ENCODE measurements at regions of chr2 and their contacts with region 1.

Region 1: DNA sequence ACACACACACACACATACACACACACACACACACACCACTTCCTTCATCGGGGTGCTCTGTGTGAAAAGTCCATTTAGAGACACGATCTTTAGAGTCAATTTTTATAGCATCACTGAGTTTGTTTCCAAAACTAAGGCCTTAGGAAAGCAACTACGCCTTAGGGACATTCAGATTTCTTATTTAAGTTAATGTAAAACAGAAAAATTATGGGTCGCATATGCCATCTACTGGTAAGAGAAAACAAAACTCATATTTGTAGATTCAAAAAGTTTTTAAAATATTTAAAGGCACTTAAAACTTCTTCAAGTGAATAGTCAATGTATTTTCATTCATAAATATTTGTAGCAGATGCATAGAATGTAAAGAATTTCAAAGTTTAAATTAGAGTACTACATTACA is 166.2 kb downstream of the ATAD2B start:
- DNase-seq: no peak
- ATAC-seq: no peak
- H3K4me3 ChIP-seq: no peak overlapping the region
- H3K27ac ChIP-seq: no peak overlapping the region
- H3K4me1 ChIP-seq: peaks cover 0 to 20% (median 7%) of the 10 kb centered on the region in 12 donors
- H3K27me3 ChIP-seq: no peaks in the 10 kb centered on the region
- CTCF ChIP-seq: peak in 10 of 12 donors; percentile 18 to 52 (median 35)
- POLR2A ChIP-seq: no peak

Region 2: DNA sequence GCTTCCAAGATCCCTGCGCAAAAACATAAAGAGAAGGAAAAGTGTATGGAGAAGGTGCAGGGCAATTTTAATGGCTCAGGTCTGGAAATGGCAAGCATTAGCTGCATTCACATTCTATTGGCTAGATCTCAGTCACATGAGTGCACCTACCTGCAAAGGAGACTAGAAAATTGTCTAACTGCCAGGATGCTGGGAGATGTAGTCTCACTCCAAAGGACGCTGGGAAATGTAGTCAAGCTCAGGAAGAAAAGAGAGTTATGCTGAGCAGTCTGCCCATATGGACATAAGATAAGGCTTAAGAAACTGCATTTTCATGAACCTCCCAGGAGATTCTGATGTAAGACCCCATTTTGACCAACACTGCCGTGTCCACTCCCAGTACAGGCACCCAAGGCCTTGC is 385.3 kb before region 1 on chr2:
- intact Hi-C with region 1: loop called in 2 of 10 experiments (anchors 10 kb)
- DNase-seq: no peak
- ATAC-seq: no peak
- H3K4me3 ChIP-seq: no peak overlapping the region
- H3K27ac ChIP-seq: no peak overlapping the region
- H3K4me1 ChIP-seq: peaks cover 0 to 5% (median 0%) of the 10 kb centered on the region in 12 donors
- H3K27me3 ChIP-seq: peaks cover 0 to 27% (median 0%) of the 10 kb centered on the region in 9 donors
- CTCF ChIP-seq: no peak
- POLR2A ChIP-seq: no peak

Region 3: DNA sequence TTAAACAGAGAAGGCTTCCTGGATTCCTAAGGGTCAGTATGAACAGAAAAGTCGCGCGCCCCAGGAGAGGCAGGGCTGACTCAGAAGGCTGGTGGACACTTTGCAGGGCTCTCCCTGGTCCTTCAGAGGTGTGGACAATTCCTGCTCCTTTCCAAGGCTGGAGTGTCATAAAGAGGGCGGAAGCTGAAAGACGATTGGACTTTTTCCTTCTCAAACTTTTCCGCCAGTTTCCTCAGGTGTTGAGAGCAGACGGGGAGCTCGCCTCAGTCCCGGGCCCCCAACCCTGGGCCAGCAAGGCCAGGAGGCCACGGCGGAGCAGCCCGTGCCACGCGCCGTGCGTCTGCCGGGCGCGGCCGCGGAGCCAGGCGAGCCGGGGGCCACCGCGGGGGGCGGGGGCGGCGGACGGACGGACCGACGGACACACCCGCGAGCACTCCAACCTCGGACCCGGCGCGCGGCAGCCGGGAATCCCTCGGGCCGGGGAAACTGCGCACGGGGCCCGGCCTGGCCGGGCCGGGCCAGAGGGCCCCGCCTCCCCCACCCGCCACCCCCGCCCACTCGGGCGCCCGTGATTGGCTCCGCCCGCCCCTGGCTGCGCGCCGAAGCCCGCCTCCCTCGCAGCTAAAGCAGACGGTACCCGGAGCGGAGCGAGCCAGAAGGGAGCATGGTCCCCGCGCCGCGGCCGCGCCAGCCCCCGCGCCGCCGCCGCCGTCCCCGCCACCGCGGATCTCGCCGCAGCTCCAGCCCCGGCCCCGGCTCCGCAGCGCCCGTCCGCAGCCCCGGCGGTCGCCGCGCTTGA is 376.0 kb before region 1 on chr2 and contains the start of gene KLHL29:
- intact Hi-C with region 1: loop called in 2 of 10 experiments (anchors 10 kb)
- DNase-seq: peak; percentile 79 to 92 (median 86)
- ATAC-seq: peak; percentile 72 to 90 (median 81)
- H3K4me3 ChIP-seq: peak within 1 kb of the TSS; percentile 48 to 80 (median 60)
- H3K27ac ChIP-seq: peak within 1 kb of the TSS in 7 of 12 donors; percentile 23 to 92 (median 61)
- H3K4me1 ChIP-seq: peaks cover 0 to 34% (median 11%) of the 10 kb centered on the region in 12 donors
- H3K27me3 ChIP-seq: peaks cover 0 to 54% (median 28%) of the 10 kb centered on the region in 9 donors
- CTCF ChIP-seq: no peak
- POLR2A ChIP-seq: no peak
- total RNA-seq, gene KLHL29: 0.74 to 2.7 (median 1.1) TPM

Region 4: GRCh38 chr2:23584054-23584745 is 176.5 kb before region 1 on chr2:
- intact Hi-C with region 1: no loop called
- DNase-seq: no peak
- ATAC-seq: no peak
- H3K4me3 ChIP-seq: no peak overlapping the region
- H3K27ac ChIP-seq: peak overlapping the region in 1 of 12 donors; percentile 85
- H3K4me1 ChIP-seq: peaks cover 0 to 8% (median 4%) of the 10 kb centered on the region in 12 donors
- H3K27me3 ChIP-seq: no peaks in the 10 kb centered on the region
- CTCF ChIP-seq: no peak
- POLR2A ChIP-seq: no peak

Region 5: GRCh38 chr2:23636426-23636825 is 124.3 kb before region 1 on chr2:
- intact Hi-C with region 1: loop called in 4 of 10 experiments (anchors 5 to 10 kb)
- DNase-seq: peak in 3 of 5 donors; percentile 43 to 68 (median 57)
- ATAC-seq: peak in 3 of 4 donors; percentile 57 to 70 (median 68)
- H3K4me3 ChIP-seq: no peak overlapping the region
- H3K27ac ChIP-seq: peak overlapping the region in 10 of 12 donors; percentile 1 to 79 (median 56)
- H3K4me1 ChIP-seq: peaks cover 5 to 19% (median 13%) of the 10 kb centered on the region in 12 donors
- H3K27me3 ChIP-seq: no peaks in the 10 kb centered on the region
- CTCF ChIP-seq: peak in 11 of 12 donors; percentile 19 to 55 (median 38)
- POLR2A ChIP-seq: no peak

Region 6: GRCh38 chr2:23649819-23650218 is 110.9 kb before region 1 on chr2:
- intact Hi-C with region 1: loop called in 3 of 10 experiments (anchors 10 kb)
- DNase-seq: peak in 2 of 5 donors; percentile 39 to 54
- ATAC-seq: peak; percentile 51 to 80 (median 58)
- H3K4me3 ChIP-seq: no peak overlapping the region
- H3K27ac ChIP-seq: no peak overlapping the region
- H3K4me1 ChIP-seq: no peaks in the 10 kb centered on the region
- H3K27me3 ChIP-seq: no peaks in the 10 kb centered on the region
- CTCF ChIP-seq: no peak
- POLR2A ChIP-seq: no peak

Region 7: DNA sequence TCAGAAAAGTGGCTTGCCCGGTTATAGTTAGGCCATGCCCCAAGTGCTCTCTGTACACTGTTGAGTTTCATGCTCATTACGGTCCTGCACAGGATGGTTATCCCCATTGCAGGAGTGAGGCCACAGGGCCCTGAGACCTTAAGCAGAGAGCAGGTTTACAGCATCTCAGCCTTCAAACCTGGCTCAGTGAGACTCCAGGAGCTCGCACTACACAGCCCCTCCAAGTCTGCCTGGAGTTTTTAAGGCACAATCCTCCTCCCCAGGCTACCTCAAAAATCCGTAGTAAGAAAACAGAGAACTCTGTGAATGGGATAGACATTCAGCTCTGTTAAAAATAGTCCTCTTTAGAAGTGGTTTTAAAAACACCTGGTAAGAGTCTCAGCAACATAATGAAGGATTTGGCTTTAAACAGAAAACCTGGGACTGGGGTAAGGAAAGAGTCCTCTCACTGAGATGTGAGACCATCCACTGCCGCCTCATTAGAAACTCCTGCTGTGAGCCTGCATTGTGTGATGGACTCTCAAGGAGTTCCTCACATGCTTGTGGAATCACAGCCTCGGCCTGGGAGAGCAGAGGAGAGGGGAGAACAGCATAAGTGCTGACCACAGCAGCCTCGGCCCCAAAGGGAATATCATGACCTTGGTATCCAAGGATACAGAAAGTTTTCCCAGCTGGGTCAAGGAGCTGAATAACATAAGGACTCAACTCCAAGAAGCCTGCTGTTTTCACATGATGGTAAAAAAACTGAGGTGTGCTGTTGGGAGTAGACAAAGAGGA is 48.6 kb before region 1 on chr2:
- intact Hi-C with region 1: no loop called
- DNase-seq: peak in 2 of 5 donors; percentile 50 to 56
- ATAC-seq: peak in 3 of 4 donors; percentile 50 to 71 (median 69)
- H3K4me3 ChIP-seq: no peak overlapping the region
- H3K27ac ChIP-seq: peak overlapping the region in 2 of 12 donors; percentile 16 to 20
- H3K4me1 ChIP-seq: peaks cover 0 to 14% (median 1%) of the 10 kb centered on the region in 12 donors
- H3K27me3 ChIP-seq: no peaks in the 10 kb centered on the region
- CTCF ChIP-seq: no peak
- POLR2A ChIP-seq: no peak